ENCODE measurements at regions of chr7 and their contacts with region 1.

Region 1: GRCh38 chr7:106153891-106154449 is 41.9 kb upstream of the SYPL1 start:
- DNase-seq: peak; percentile 84
- ATAC-seq: peak; percentile 89
- H3K4me3 ChIP-seq: peak overlapping the region in 4 of 5 experiments; percentile 2 to 38 (median 32)
- H3K4me3 Mint-ChIP-seq: peak overlapping the region; percentile 84
- H3K27ac ChIP-seq: no peak overlapping the region
- H3K27ac Mint-ChIP-seq: peak overlapping the region; percentile 62
- H3K4me1 ChIP-seq: peaks cover 34 to 48% of the 10 kb centered on the region in 2 donors
- H3K4me1 Mint-ChIP-seq: peaks cover 48% of the 10 kb centered on the region
- H3K27me3 ChIP-seq: no peaks in the 10 kb centered on the region
- H3K27me3 Mint-ChIP-seq: no peaks in the 10 kb centered on the region
- CTCF ChIP-seq: peak; percentile 95

Region 2: GRCh38 chr7:105759670-105760550 is 394.1 kb before region 1 on chr7:
- CTCF ChIA-PET with region 1: interaction called, 20 read pairs
- POLR2A ChIA-PET with region 1: no interaction called
- intact Hi-C with region 1: loop called (anchors 5 kb)
- DNase-seq: peak; percentile 44
- ATAC-seq: no peak
- H3K4me3 ChIP-seq: no peak overlapping the region
- H3K4me3 Mint-ChIP-seq: no peak overlapping the region
- H3K27ac ChIP-seq: no peak overlapping the region
- H3K27ac Mint-ChIP-seq: no peak overlapping the region
- H3K4me1 ChIP-seq: no peaks in the 10 kb centered on the region
- H3K4me1 Mint-ChIP-seq: no peaks in the 10 kb centered on the region
- H3K27me3 ChIP-seq: no peaks in the 10 kb centered on the region
- H3K27me3 Mint-ChIP-seq: no peaks in the 10 kb centered on the region
- CTCF ChIP-seq: peak; percentile 55

Region 3: DNA sequence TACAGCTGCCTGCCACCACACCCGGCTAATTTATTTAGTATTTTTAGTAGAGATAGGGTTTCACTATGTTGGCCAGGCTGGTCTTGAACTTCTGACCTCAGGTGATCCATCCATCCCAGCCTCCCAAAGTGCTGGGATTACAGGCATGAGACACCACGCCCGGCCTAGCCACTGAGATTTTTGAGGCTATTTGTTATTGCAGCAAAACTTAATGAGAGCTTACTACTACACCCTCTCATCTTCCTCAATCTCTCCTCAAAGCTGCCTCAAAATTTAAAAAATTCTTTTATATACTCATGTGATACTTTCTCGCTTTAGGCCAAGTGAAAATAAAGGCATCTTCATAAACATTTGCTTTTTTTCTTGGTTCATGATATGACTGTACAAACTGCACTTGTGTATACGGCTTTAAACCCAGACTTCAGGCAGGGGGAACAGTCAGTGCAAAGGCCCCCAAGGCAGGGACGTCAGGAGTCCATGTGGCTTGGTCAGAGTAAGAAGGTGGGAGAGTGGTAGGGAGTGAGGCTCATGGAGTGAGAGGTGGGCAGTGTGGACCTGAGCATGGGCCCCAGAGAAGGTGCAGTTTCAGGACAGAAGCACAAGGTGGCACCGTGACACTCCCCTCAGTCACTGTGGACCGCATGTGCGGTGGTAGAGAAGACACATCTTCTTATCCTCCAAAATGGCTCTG is 97.3 kb before region 1 on chr7:
- CTCF ChIA-PET with region 1: interaction called, 390 read pairs
- POLR2A ChIA-PET with region 1: interaction called, 17 read pairs
- intact Hi-C with region 1: loop called (anchors 1 kb)
- DNase-seq: peak; percentile 87
- ATAC-seq: peak; percentile 46
- H3K4me3 ChIP-seq: no peak overlapping the region
- H3K4me3 Mint-ChIP-seq: peak overlapping the region; percentile 73
- H3K27ac ChIP-seq: peak overlapping the region; percentile 89 to 94
- H3K27ac Mint-ChIP-seq: peak overlapping the region; percentile 96
- H3K4me1 ChIP-seq: peaks cover 51 to 58% of the 10 kb centered on the region in 2 donors
- H3K4me1 Mint-ChIP-seq: peaks cover 60% of the 10 kb centered on the region
- H3K27me3 ChIP-seq: no peaks in the 10 kb centered on the region
- H3K27me3 Mint-ChIP-seq: no peaks in the 10 kb centered on the region
- CTCF ChIP-seq: peak; percentile 81

Region 4: DNA sequence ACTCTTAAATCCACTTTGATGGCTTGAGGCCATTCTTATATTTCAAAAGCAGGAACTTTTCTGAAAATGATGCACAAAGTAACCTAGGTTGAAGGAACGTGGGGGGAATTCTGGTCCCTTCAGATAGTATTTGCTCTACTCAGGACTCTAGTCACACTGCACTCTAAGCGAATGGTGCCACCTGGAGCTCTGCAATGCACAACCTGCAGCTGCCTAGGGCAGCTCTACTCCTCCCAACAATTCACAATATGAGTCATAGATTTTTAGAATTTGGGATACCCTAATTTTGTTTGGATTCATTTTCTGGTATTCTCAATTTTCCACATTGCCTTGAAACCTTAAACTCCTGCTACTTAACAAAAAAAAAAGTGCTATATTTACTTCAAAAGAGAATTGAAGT is 59.2 kb before region 1 on chr7:
- CTCF ChIA-PET with region 1: interaction called, 53 read pairs
- POLR2A ChIA-PET with region 1: interaction called, 3 read pairs
- intact Hi-C with region 1: no loop called
- DNase-seq: peak; percentile 51
- ATAC-seq: peak; percentile 60
- H3K4me3 ChIP-seq: no peak overlapping the region
- H3K4me3 Mint-ChIP-seq: no peak overlapping the region
- H3K27ac ChIP-seq: peak overlapping the region in 1 of 2 donors; percentile 77
- H3K27ac Mint-ChIP-seq: peak overlapping the region; percentile 54
- H3K4me1 ChIP-seq: peaks cover 32 to 61% of the 10 kb centered on the region in 2 donors
- H3K4me1 Mint-ChIP-seq: peaks cover 67% of the 10 kb centered on the region
- H3K27me3 ChIP-seq: no peaks in the 10 kb centered on the region
- H3K27me3 Mint-ChIP-seq: no peaks in the 10 kb centered on the region
- CTCF ChIP-seq: peak; percentile 24

Region 5: GRCh38 chr7:106117786-106118544 is 36.0 kb before region 1 on chr7:
- CTCF ChIA-PET with region 1: interaction called, 120 read pairs
- POLR2A ChIA-PET with region 1: no interaction called
- intact Hi-C with region 1: loop called (anchors 2 kb)
- DNase-seq: no peak
- ATAC-seq: no peak
- H3K4me3 ChIP-seq: no peak overlapping the region
- H3K4me3 Mint-ChIP-seq: no peak overlapping the region
- H3K27ac ChIP-seq: peak overlapping the region in 1 of 2 donors; percentile 86
- H3K27ac Mint-ChIP-seq: peak overlapping the region; percentile 92
- H3K4me1 ChIP-seq: peaks cover 48 to 49% of the 10 kb centered on the region in 2 donors
- H3K4me1 Mint-ChIP-seq: peaks cover 54% of the 10 kb centered on the region
- H3K27me3 ChIP-seq: no peaks in the 10 kb centered on the region
- H3K27me3 Mint-ChIP-seq: no peaks in the 10 kb centered on the region
- CTCF ChIP-seq: no peak

Region 6: GRCh38 chr7:106176414-106177299 is 22.7 kb after region 1 on chr7:
- CTCF ChIA-PET with region 1: interaction called, 159 read pairs
- POLR2A ChIA-PET with region 1: no interaction called
- intact Hi-C with region 1: no loop called
- DNase-seq: peak; percentile 74
- ATAC-seq: peak; percentile 69
- H3K4me3 ChIP-seq: no peak overlapping the region
- H3K4me3 Mint-ChIP-seq: no peak overlapping the region
- H3K27ac ChIP-seq: no peak overlapping the region
- H3K27ac Mint-ChIP-seq: no peak overlapping the region
- H3K4me1 ChIP-seq: peaks cover 5 to 13% of the 10 kb centered on the region in 2 donors
- H3K4me1 Mint-ChIP-seq: peaks cover 11% of the 10 kb centered on the region
- H3K27me3 ChIP-seq: peaks cover 0 to 6% (median 5%) of the 10 kb centered on the region in 4 experiments
- H3K27me3 Mint-ChIP-seq: peaks cover 13% of the 10 kb centered on the region
- CTCF ChIP-seq: peak; percentile 96

Region 7: GRCh38 chr7:106187613-106188350 is 33.8 kb after region 1 on chr7:
- CTCF ChIA-PET with region 1: no interaction called
- POLR2A ChIA-PET with region 1: no interaction called
- intact Hi-C with region 1: no loop called
- DNase-seq: no peak
- ATAC-seq: no peak
- H3K4me3 ChIP-seq: no peak overlapping the region
- H3K4me3 Mint-ChIP-seq: no peak overlapping the region
- H3K27ac ChIP-seq: no peak overlapping the region
- H3K27ac Mint-ChIP-seq: no peak overlapping the region
- H3K4me1 ChIP-seq: no peaks in the 10 kb centered on the region
- H3K4me1 Mint-ChIP-seq: no peaks in the 10 kb centered on the region
- H3K27me3 ChIP-seq: no peaks in the 10 kb centered on the region
- H3K27me3 Mint-ChIP-seq: peaks cover 18% of the 10 kb centered on the region
- CTCF ChIP-seq: no peak

Region 8: DNA sequence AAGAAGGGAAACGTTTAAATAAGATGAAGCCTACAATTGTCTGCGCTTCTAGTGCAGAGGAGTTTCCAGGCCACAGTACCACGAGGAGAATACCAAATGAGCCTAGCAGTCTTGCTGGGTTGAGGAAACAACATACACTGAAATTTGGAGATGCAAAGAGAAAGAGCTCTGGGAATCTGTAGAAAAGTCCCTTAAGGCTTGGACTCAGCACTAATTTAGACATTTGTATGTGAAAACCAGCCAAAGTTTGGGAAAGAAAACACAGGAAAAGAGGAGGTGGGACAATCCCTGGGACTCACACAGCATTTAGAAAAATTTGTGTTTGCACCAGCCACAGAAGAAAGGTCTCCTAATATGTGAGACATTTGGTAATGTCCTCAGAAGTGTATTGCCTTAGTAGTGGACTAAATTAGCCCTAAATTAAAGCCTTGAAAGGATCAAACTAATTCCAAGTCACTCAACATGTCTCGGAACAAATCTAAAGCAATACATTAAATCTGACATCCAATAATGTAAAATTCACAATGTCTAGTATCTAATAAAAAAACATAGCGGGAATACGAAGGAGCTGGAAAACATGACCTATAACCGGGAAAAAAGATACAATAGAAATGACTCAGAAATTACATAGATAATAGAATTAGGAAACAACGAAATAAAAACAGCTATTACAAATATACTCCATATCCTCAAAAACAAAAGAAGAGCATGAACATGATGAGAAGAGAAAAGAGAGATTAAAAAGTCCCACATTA is 317.9 kb after region 1 on chr7:
- CTCF ChIA-PET with region 1: no interaction called
- POLR2A ChIA-PET with region 1: no interaction called
- intact Hi-C with region 1: no loop called
- DNase-seq: no peak
- ATAC-seq: no peak
- H3K4me3 ChIP-seq: no peak overlapping the region
- H3K4me3 Mint-ChIP-seq: no peak overlapping the region
- H3K27ac ChIP-seq: no peak overlapping the region
- H3K27ac Mint-ChIP-seq: no peak overlapping the region
- H3K4me1 ChIP-seq: no peaks in the 10 kb centered on the region
- H3K4me1 Mint-ChIP-seq: no peaks in the 10 kb centered on the region
- H3K27me3 ChIP-seq: no peaks in the 10 kb centered on the region
- H3K27me3 Mint-ChIP-seq: peaks cover 9% of the 10 kb centered on the region
- CTCF ChIP-seq: no peak

Measured in B cell (primary cell).